Dorsolateral prefrontal cortex (tissue), 120 donors: ENCODE measurements at regions of chr1 and their contacts with region 1.

Region 1: DNA sequence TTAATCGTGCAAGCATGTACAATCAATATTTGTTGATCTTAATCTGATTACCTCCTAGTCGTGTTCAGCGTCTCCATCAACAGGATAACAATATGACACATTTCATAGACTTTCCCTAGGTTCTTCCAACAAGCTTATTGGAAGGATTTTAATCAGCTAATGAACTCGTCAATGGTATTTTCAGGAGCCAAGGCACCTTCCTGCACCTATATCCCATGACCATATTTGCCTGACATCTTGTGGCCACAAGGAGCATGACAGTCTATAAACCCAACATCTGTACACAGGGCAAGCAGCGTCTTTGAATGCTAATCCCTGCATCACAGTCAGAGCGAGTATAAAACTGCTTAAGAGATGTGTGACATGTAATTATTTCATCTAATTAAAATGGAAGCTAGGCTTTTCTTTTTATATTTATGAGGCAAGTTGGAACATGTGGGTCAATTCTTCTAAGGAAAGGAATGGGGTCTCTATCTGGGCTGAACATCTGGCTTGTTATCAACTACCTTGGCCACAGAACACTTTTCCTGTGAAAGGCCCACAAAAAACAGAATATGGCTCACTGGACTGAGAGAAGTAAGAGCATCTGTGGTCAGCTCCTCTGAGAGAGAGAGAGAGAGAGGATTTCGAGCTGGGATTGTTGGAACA is 388.8 kb downstream of the NTNG1 start:
- DNase-seq: peak in 1 of 10 donors; percentile 40
- H3K4me3 ChIP-seq: no peak overlapping the region
- H3K27ac ChIP-seq: no peak overlapping the region
- H3K27me3 ChIP-seq: peaks cover 0 to 4% (median 0%) of the 10 kb centered on the region in 45 donors
- CTCF ChIP-seq: peak; percentile 54 to 85 (median 76)

Region 2: GRCh38 chr1:107277022-107277421 is 252.6 kb before region 1 on chr1:
- intact Hi-C with region 1: loop called in 1 of 2 experiments (anchors 5 kb)
- DNase-seq: peak in 3 of 10 donors; percentile 39 to 40 (median 39)
- H3K4me3 ChIP-seq: no peak overlapping the region
- H3K27ac ChIP-seq: no peak overlapping the region
- H3K27me3 ChIP-seq: no peaks in the 10 kb centered on the region
- CTCF ChIP-seq: peak in 53 of 56 donors; percentile 24 to 71 (median 50)

Region 3: DNA sequence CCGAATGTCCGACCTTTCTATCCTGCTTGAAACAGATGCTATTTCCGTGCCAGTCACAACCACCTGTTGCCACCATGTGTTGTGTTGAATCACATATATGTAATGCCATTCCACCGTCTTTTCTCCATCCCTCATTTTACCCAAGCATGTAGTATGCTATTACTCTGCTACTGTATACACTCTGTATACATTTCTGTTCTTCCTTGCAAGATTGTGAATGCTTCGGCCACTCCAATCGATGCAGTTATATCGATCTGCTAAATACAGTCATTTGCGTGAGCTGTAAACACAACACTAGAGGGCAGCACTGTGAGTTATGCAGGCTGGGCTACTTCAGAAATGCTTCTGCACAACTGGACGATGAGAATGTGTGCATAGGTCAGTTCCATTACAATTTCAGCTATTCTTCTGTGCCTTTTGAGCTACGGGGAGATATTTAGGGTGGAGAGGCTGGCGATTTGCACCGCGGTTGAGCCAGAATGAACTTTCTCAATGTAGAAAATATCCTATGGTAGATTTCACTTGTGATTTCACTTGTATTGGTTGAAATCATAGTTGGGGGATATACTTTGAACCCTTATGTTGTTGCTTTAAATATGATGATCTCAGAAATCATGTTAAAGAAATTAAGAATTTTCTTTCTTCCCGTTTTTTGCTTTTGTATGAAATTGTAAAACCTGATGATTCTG is 98.9 kb before region 1 on chr1:
- intact Hi-C with region 1: loop called in 1 of 2 experiments (anchors 5 kb)
- DNase-seq: peak in 2 of 10 donors; percentile 14 to 27
- H3K4me3 ChIP-seq: no peak overlapping the region
- H3K27ac ChIP-seq: no peak overlapping the region
- H3K27me3 ChIP-seq: no peaks in the 10 kb centered on the region
- CTCF ChIP-seq: peak in 55 of 56 donors; percentile 35 to 75 (median 62)

Region 4: GRCh38 chr1:107750358-107750959 is 220.8 kb after region 1 on chr1:
- intact Hi-C with region 1: loop called in 1 of 2 experiments (anchors 10 kb)
- DNase-seq: peak in 8 of 10 donors; percentile 30 to 66 (median 50)
- H3K4me3 ChIP-seq: no peak overlapping the region
- H3K27ac ChIP-seq: no peak overlapping the region
- H3K27me3 ChIP-seq: no peaks in the 10 kb centered on the region
- CTCF ChIP-seq: peak; percentile 44 to 86 (median 70)

Region 5: GRCh38 chr1:107941123-107941522 is 411.5 kb after region 1 on chr1:
- intact Hi-C with region 1: no loop called
- DNase-seq: no peak
- H3K4me3 ChIP-seq: no peak overlapping the region
- H3K27ac ChIP-seq: peak overlapping the region in 1 of 59 donors; percentile 2
- H3K27me3 ChIP-seq: peaks cover 0 to 7% (median 0%) of the 10 kb centered on the region in 45 donors
- CTCF ChIP-seq: no peak